Activated naive CD4-positive, alpha-beta T cell treated with anti-CD3 and anti-CD28 coated beads for 36 hours (primary cell): ENCODE measurements at regions of chr3 and their contacts with region 1.

Region 1: DNA sequence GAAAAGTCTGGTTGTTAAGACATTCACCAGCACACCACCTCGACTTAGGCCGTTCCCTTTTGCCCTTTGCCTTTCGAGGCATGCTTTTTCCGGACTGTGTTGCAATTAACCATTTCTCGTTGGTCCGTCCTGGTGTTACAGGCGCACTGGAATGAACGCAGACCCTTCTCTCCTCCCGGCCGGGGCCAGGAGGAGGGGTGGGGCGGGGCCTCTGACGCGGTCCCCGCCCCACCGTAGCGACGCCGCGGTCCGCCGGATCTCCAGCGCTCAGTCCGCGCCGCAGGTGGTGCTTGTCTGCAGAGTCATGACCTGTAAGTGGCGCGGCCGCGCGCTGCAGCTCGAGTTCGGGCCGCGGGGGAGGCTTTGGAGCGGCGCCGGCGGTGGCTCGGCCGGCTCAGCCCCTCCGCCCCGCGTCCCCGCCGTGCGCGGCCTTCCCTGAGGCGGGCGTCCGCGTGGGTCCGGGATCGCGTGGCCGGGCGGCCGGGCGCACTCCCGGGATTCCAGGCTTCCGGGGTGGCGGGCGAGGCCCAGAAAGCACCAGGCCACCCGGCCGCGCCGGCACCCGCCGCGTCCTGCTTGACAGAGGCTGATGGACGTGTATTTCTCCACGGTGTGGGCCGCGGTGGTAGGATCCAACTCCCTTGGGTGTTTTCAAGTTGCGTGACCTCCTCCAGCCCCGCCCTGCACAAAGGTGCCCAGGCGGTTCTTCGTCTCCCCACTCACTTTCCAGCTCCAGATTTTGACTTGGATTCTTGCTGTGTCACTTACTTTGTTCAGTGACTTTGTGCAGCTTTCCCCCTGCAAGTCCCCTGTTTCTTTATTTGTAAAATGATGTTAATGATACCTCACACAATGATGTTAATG is at the start of gene NIT2:
- DNase-seq: peak; percentile 82
- H3K4me3 Mint-ChIP-seq: peak within 1 kb of the TSS; percentile 86
- H3K27ac Mint-ChIP-seq: peak within 1 kb of the TSS; percentile 86
- H3K4me1 Mint-ChIP-seq: peaks cover 26% of the 10 kb centered on the region
- H3K27me3 Mint-ChIP-seq: no peaks in the 10 kb centered on the region
- total RNA-seq, gene NIT2: 69.1 to 76.0 TPM

Region 2: DNA sequence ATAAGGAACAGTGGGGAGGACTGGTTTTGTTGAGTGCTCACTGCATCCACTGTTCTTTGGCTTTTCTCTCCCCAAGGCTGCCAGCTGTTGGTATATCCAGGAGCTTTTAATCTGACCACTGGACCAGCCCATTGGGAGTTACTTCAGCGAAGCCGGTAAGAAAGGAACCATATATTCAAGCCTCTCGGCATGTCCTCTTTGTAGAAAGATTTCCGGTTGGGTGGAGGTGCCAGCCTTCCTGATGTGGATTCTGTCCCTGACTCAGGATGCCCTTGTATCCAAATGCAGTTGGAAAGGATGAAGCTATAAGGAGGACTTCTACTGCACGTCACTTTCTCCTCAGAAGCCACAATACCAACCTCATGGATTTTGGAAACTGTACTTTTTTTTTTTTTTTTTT is 14.0 kb after region 1 on chr3:
- CTCF ChIA-PET with region 1: no interaction called
- intact Hi-C with region 1: loop called (anchors 1 kb)
- DNase-seq: no peak
- H3K4me3 Mint-ChIP-seq: no peak overlapping the region
- H3K27ac Mint-ChIP-seq: no peak overlapping the region
- H3K4me1 Mint-ChIP-seq: peaks cover 5% of the 10 kb centered on the region
- H3K27me3 Mint-ChIP-seq: no peaks in the 10 kb centered on the region

Region 3: DNA sequence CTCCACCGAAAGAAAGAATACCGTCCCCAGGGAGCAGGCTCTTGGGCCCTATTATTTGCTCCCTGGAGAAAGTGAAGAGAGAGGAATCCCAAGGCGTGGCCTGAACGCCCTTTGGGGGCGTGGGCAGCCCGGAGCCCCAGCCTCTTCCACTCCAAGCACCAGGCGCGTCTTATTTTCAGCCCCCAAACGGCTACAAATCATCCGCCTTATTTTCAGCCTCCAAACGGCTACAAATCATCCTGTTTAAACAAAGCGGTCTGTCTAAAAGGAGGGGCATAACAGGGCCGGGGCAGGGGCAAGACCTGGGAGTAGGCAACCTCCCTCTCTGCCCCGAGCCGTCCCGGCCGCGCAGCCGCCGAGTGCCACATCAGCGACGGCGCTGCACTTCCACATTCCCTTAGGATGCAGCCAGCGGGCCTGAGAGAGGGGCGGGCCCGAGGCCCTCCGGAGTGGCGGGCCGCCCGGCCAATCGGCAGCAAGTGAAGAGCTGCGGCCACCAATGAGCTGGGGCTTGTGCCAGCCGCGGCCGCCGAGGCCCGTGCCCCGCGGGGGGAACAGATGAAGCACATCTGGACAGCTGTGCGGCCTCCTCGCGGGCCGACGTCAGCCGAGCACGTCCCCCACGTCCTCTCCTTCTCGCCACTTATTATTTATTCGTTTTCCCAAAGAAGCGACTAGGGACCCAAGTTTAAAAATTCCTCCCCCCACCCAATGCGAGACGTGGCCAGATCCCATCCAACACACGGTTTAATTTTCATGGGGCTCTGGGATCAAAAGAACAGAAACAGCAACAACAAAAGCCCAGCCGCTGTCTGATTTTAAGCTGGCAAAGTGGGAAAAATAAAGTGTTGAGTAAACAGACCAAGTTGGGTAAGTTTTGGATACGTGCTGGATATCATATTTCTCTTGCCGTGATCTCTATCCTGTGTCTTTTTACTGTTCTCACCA is 157.6 kb after region 1 on chr3 and contains the start of gene TMEM45A:
- CTCF ChIA-PET with region 1: no interaction called
- intact Hi-C with region 1: loop called (anchors 5 kb)
- DNase-seq: peak; percentile 86
- H3K4me3 Mint-ChIP-seq: peak within 1 kb of the TSS; percentile 77
- H3K27ac Mint-ChIP-seq: no peak within 1 kb of the TSS
- H3K4me1 Mint-ChIP-seq: peaks cover 3% of the 10 kb centered on the region
- H3K27me3 Mint-ChIP-seq: peaks cover 6% of the 10 kb centered on the region
- total RNA-seq, gene TMEM45A: 0.21 to 0.22 TPM